ENCODE measurements at regions of chr17 and their contacts with region 1.

Region 1: GRCh38 chr17:38351412-38352222 is at the start of gene SOCS7:
- DNase-seq: peak; percentile 81
- ATAC-seq: peak; percentile 84
- H3K4me3 ChIP-seq: peak within 1 kb of the TSS; percentile 73
- H3K27ac ChIP-seq: peak within 1 kb of the TSS; percentile 37; the same call in 1 of the 2 replicates
- H3K4me1 ChIP-seq: peaks cover 9% of the 10 kb centered on the region; the same call in 1 of the 2 replicates
- H3K27me3 ChIP-seq: no peaks in the 10 kb centered on the region
- CTCF ChIP-seq: no peak
- total RNA-seq, gene SOCS7: 7.4 and 9.8 TPM in 2 replicates

Region 2: GRCh38 chr17:38361694-38362465 is 10.3 kb after region 1 on chr17:
- CTCF ChIA-PET with region 1: interaction called, 3 read pairs
- POLR2A ChIA-PET with region 1: interaction called, 13 read pairs
- intact Hi-C with region 1: no loop called
- DNase-seq: peak; percentile 25
- ATAC-seq: peak; percentile 61
- H3K4me3 ChIP-seq: no peak overlapping the region
- H3K27ac ChIP-seq: no peak overlapping the region
- H3K4me1 ChIP-seq: no peaks in the 10 kb centered on the region
- H3K27me3 ChIP-seq: no peaks in the 10 kb centered on the region
- CTCF ChIP-seq: no peak

Region 3: GRCh38 chr17:38379438-38379837 is 27.8 kb after region 1 on chr17:
- CTCF ChIA-PET with region 1: interaction called, 11 read pairs
- POLR2A ChIA-PET with region 1: no interaction called
- intact Hi-C with region 1: no loop called
- DNase-seq: no peak
- ATAC-seq: no peak
- H3K4me3 ChIP-seq: no peak overlapping the region
- H3K27ac ChIP-seq: no peak overlapping the region
- H3K4me1 ChIP-seq: no peaks in the 10 kb centered on the region
- H3K27me3 ChIP-seq: no peaks in the 10 kb centered on the region
- CTCF ChIP-seq: no peak

Region 4: GRCh38 chr17:38415250-38416194 is 63.9 kb after region 1 on chr17:
- CTCF ChIA-PET with region 1: interaction called, 46 read pairs
- POLR2A ChIA-PET with region 1: interaction called, 3 read pairs
- intact Hi-C with region 1: loop called (anchors 1 kb)
- DNase-seq: peak; percentile 5
- ATAC-seq: peak; percentile 79
- H3K4me3 ChIP-seq: peak overlapping the region; percentile 51; the same call in 1 of the 2 replicates
- H3K27ac ChIP-seq: no peak overlapping the region
- H3K4me1 ChIP-seq: 0 out of 2 replicates have a peak, but pooled peaks cover 3% of the 10 kb centered on the region
- H3K27me3 ChIP-seq: peaks cover 11% of the 10 kb centered on the region
- CTCF ChIP-seq: no peak

Measured in PC-3 (cell line).